ENCODE measurements at regions of chr3 and their contacts with region 1.

Region 1: DNA sequence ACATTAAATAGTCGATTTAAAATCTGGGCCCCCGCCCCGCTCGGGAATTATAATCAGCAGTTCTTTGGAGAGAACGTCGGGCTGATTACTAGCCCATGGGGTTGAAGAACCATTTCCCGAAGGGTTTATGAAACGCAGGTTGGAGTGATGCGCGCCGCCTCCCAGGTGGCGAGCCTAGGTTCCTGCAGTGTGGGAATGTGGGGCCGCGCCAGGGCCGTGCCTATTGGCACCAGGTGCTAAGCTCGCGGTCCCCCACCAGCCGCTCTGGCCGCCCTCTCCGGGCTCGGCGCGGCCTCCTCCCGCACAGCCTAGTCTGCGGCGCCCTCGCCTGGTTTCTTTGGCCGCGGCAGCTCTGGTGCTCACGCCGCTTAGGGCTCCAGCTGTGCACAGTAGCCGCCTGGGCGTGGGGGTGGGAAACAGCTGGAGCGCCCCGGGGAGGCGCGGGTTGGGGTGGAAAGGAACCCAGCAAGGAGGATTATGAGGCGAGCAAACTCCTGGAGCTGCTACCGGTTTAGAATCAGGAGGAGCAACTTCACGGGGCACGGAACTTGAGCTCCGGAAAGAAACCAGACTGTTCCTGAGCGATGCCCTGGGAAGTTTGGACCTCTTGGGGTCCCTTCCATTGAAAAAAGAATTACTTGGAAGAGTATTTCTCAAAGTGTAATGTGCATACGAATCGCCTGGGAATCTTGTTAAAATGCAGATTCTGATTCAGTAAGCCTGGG is 5.6 kb upstream of the MECOM start:
- DNase-seq: peak; percentile 94
- ATAC-seq: peak; percentile 95
- H3K4me3 ChIP-seq: peak overlapping the region; percentile 41
- H3K27ac ChIP-seq: peak overlapping the region; percentile 53
- H3K4me1 ChIP-seq: peaks cover 9% of the 10 kb centered on the region
- H3K27me3 ChIP-seq: peaks cover 69% of the 10 kb centered on the region
- CTCF ChIP-seq: peak; percentile 80

Region 2: GRCh38 chr3:169149349-169149890 is 519.7 kb before region 1 on chr3:
- intact Hi-C with region 1: loop called (anchors 5 kb)
- DNase-seq: peak; percentile 94
- ATAC-seq: peak; percentile 95
- H3K4me3 ChIP-seq: peak overlapping the region; percentile 67
- H3K27ac ChIP-seq: peak overlapping the region; percentile 71
- H3K4me1 ChIP-seq: peaks cover 8% of the 10 kb centered on the region
- H3K27me3 ChIP-seq: peaks cover 24% of the 10 kb centered on the region
- CTCF ChIP-seq: peak; percentile 83